GM12878 (cell line): ENCODE measurements at regions of chr1 and their contacts with region 1.

Region 1: DNA sequence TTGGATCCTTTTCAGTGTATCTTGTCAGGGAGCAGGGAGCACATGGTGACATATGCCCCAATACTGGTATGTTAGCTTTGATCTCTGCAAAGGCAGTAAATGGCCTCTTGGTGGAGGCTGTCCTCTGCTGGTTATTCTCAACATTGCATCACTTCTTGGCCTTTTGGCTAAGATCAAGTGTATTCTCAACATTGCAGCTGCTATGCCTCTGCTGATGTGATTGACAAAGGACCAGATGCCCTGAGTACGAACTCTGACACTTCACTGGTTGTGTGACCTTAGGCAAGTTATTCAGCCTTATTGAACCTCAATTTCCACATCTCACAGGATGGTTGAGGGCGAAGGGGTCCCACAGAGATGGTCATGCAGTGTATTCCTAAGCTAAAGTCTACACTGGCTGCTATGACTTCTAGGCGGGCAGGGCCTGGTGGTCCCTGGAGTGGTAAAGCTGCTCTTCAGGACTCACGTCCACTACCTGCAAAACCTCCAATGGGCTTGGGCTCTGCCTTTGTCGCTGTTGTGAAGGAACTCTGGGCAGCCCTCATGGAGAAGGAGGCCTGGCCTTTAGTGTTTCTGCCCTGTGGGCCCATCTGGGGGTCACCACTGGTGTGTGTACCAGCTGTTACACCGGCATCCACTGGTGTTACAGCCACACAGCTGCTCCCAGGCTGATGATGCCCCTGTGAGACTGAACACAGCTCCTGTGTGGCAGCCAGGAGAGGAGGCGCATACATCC is 64.8 kb downstream of the DNTTIP2 start:
- DNase-seq: peak; percentile 40
- ATAC-seq: peak; percentile 92
- H3K4me3 ChIP-seq: no peak overlapping the region
- H3K27ac ChIP-seq: no peak overlapping the region
- H3K4me1 ChIP-seq: peaks cover 8% of the 10 kb centered on the region
- H3K27me3 ChIP-seq: no peaks in the 10 kb centered on the region; a peak in 1 of 4 replicates
- CTCF ChIP-seq: peak; percentile 97 to 99 (median 97); a peak in 5 of 6 replicates
- EP300 ChIP-seq: no peak
- POLR2A ChIP-seq: no peak
- RAD21 ChIP-seq: peak; percentile 100

Region 2: DNA sequence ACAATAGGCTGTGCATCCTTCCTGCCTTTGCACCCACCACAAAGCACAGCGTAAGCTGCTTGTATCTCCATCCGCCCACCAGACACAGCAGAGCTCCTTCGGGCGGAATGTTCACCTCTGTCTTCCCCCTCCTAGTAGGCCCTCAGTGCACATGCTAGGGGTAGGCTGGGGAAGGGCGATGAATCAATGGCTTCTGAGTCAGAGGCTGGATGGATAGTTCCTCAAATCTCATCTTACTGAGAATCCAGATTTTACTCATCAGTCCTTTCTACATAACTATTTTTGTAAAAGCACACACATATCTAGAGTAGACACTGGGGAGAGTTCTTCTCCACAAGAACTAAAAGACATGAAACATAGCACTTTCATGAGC is 206.4 kb before region 1 on chr1:
- CTCF ChIA-PET with region 1: interaction called, 9 read pairs
- POLR2A ChIA-PET with region 1: no interaction called
- RAD21 ChIA-PET with region 1: interaction called, 5 read pairs
- SMC1A ChIA-PET with region 1: interaction called, 15 read pairs
- in situ Hi-C with region 1: no loop called
- intact Hi-C with region 1: no loop called
- DNase-seq: peak; percentile 76
- ATAC-seq: peak; percentile 94
- H3K4me3 ChIP-seq: no peak overlapping the region
- H3K27ac ChIP-seq: peak overlapping the region; percentile 40; the same call in 1 of the 2 replicates
- H3K4me1 ChIP-seq: peaks cover 28% of the 10 kb centered on the region
- H3K27me3 ChIP-seq: no peaks in the 10 kb centered on the region; a peak in 2 of 4 replicates
- CTCF ChIP-seq: no peak
- EP300 ChIP-seq: peak in 1 of 2 experiments; percentile 89; a peak in 2 of 4 replicates
- POLR2A ChIP-seq: no peak
- RAD21 ChIP-seq: no peak

Region 3: GRCh38 chr1:93672069-93672468 is 142.2 kb before region 1 on chr1:
- CTCF ChIA-PET with region 1: interaction called, 28 read pairs
- POLR2A ChIA-PET with region 1: no interaction called
- RAD21 ChIA-PET with region 1: interaction called, 9 read pairs
- SMC1A ChIA-PET with region 1: interaction called, 39 read pairs
- in situ Hi-C with region 1: no loop called
- intact Hi-C with region 1: no loop called
- DNase-seq: no peak
- ATAC-seq: no peak
- H3K4me3 ChIP-seq: no peak overlapping the region
- H3K27ac ChIP-seq: no peak overlapping the region
- H3K4me1 ChIP-seq: no peaks in the 10 kb centered on the region
- H3K27me3 ChIP-seq: no peaks in the 10 kb centered on the region; a peak in 1 of 4 replicates
- CTCF ChIP-seq: no peak
- EP300 ChIP-seq: no peak
- POLR2A ChIP-seq: no peak
- RAD21 ChIP-seq: no peak

Region 4: GRCh38 chr1:93692983-93693591 is 121.1 kb before region 1 on chr1:
- CTCF ChIA-PET with region 1: interaction called, 9 read pairs
- POLR2A ChIA-PET with region 1: interaction called, 3 read pairs
- RAD21 ChIA-PET with region 1: interaction called, 8 read pairs
- SMC1A ChIA-PET with region 1: interaction called, 11 read pairs
- in situ Hi-C with region 1: no loop called
- intact Hi-C with region 1: no loop called
- DNase-seq: peak; percentile 63
- ATAC-seq: peak; percentile 88
- H3K4me3 ChIP-seq: no peak overlapping the region
- H3K27ac ChIP-seq: peak overlapping the region; percentile 30
- H3K4me1 ChIP-seq: peaks cover 44% of the 10 kb centered on the region
- H3K27me3 ChIP-seq: no peaks in the 10 kb centered on the region
- CTCF ChIP-seq: no peak
- EP300 ChIP-seq: peak in 1 of 2 experiments; percentile 14; a peak in 1 of 4 replicates
- POLR2A ChIP-seq: no peak
- RAD21 ChIP-seq: no peak

Region 5: GRCh38 chr1:93734999-93735398 is 79.2 kb before region 1 on chr1:
- CTCF ChIA-PET with region 1: interaction called, 32 read pairs
- POLR2A ChIA-PET with region 1: no interaction called
- RAD21 ChIA-PET with region 1: interaction called, 5 read pairs
- SMC1A ChIA-PET with region 1: interaction called, 4 read pairs
- in situ Hi-C with region 1: no loop called
- intact Hi-C with region 1: loop called (anchors 2 kb)
- DNase-seq: no peak
- ATAC-seq: peak; percentile 70
- H3K4me3 ChIP-seq: no peak overlapping the region
- H3K27ac ChIP-seq: no peak overlapping the region
- H3K4me1 ChIP-seq: peaks cover 11% of the 10 kb centered on the region
- H3K27me3 ChIP-seq: no peaks in the 10 kb centered on the region
- CTCF ChIP-seq: peak; percentile 28 to 52 (median 39)
- EP300 ChIP-seq: no peak
- POLR2A ChIP-seq: no peak
- RAD21 ChIP-seq: peak; percentile 39

Region 6: DNA sequence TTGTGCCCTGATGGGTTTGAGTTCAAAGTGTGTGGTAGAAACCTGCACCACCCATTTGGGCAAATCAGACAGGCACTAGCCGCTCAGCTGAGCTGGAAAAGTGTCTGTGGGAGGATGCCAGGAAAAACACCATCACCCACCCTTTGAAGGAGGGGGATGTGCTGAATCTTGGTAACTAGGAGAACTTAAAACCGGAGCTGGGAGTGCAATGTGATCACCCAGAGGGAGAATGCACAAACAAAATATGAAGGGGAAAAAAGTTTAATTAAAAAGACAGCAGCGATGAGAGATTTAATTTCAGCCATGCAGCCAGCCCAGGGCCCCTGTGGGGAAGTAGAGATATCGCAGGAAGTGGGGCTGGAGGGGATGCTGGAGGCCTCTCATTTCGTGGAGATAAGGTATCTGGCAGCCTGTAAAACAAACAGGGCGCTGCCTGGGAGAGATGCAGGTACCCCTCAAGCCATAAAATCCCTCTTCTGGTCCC is 45.8 kb before region 1 on chr1:
- CTCF ChIA-PET with region 1: no interaction called
- POLR2A ChIA-PET with region 1: no interaction called
- RAD21 ChIA-PET with region 1: no interaction called
- SMC1A ChIA-PET with region 1: interaction called, 13 read pairs
- in situ Hi-C with region 1: no loop called
- intact Hi-C with region 1: no loop called
- DNase-seq: no peak
- ATAC-seq: no peak
- H3K4me3 ChIP-seq: no peak overlapping the region
- H3K27ac ChIP-seq: no peak overlapping the region
- H3K4me1 ChIP-seq: no peaks in the 10 kb centered on the region
- H3K27me3 ChIP-seq: no peaks in the 10 kb centered on the region
- CTCF ChIP-seq: no peak
- EP300 ChIP-seq: no peak
- POLR2A ChIP-seq: no peak
- RAD21 ChIP-seq: no peak

Region 7: DNA sequence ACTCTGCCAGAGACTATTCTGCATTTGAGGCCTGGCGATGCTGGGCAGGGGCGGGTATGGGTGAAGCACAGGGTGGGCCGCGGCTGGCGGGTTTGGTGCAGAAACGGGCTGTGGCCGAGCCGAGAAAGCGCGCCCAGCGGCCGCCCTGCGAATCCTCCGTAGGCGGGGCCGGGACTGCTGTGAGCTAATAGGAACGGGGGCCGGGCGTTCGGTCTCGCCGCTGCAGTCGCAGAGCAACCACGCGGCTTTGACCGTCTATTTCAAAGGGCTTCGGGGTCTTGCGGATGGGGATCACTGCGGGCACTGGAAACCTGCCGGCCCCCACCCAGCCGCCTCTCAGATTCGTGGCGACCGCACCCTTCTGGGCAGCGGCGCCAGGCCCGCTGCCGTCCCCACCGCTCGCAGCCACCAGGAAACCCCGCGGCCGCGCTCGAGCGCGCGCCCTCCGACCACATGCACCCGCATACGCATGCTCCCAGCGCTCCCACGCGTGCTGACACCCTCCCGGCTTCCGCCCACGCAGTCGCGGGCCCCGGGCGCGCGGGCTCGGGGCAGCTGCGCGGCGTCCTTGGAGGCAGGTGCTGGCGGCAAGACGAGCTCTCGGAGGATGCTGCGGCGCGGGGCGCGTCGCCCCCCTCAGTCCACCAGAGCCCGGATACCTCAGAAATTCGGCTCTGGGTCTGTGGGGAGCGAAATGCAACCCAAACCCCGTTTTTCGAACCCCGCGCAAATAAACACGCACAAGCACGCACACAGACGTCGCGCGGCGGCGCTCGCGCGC is 32.2 kb after region 1 on chr1:
- CTCF ChIA-PET with region 1: interaction called, 156 read pairs
- POLR2A ChIA-PET with region 1: no interaction called
- RAD21 ChIA-PET with region 1: interaction called, 36 read pairs
- SMC1A ChIA-PET with region 1: interaction called, 89 read pairs
- in situ Hi-C with region 1: no loop called
- intact Hi-C with region 1: no loop called
- DNase-seq: no peak
- ATAC-seq: peak; percentile 78
- H3K4me3 ChIP-seq: peak overlapping the region; percentile 84
- H3K27ac ChIP-seq: peak overlapping the region; percentile 69
- H3K4me1 ChIP-seq: peaks cover 6% of the 10 kb centered on the region
- H3K27me3 ChIP-seq: no peaks in the 10 kb centered on the region
- CTCF ChIP-seq: peak; percentile 17 to 44 (median 24); a peak in 3 of 6 replicates
- EP300 ChIP-seq: no peak
- POLR2A ChIP-seq: peak; percentile 75
- RAD21 ChIP-seq: no peak

Region 8: DNA sequence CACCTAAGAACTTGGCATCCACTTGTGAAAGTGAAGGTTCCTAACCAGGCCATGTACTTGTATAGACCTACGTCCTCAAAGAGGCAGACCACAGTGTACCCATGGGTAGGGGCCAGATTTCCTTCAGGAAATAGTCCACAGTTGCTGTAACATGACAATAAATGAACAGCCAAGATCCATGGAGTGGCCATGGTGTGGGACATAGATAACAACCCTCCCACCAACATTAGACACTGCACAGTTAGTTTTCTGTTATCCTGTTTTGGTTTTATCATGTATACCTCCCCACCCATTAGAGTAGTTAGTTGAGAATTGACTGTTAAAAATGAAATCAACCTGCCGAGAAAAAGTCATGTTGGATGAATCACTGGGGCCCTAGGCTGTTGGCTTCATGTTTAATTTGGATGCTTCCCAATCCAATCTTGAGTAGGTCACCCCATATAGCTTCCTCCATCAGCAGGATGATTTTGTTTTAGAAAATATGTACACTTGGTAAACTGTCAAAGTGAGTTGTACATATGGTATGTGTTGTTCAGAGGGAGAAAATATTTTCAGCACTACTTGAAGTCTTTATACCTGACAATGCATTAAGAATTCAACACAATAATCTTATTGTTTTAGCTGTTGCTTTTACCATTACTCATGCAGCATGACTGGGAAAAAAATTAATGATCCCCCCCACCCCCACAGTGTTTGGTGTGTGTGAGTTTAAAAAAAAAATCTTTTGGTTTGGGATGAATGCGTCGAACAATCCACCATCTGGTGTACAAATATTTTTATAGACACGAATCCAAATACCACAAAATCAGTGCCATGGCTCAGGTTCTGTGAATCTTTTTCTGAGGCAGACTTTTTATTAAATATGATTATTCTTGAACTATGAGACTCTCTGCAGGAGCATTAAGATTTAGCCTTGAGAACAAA is 511.4 kb after region 1 on chr1:
- CTCF ChIA-PET with region 1: no interaction called
- POLR2A ChIA-PET with region 1: no interaction called
- RAD21 ChIA-PET with region 1: no interaction called
- SMC1A ChIA-PET with region 1: no interaction called
- in situ Hi-C with region 1: no loop called
- intact Hi-C with region 1: no loop called
- DNase-seq: no peak
- ATAC-seq: no peak
- H3K4me3 ChIP-seq: no peak overlapping the region
- H3K27ac ChIP-seq: no peak overlapping the region
- H3K4me1 ChIP-seq: no peaks in the 10 kb centered on the region
- H3K27me3 ChIP-seq: peaks cover 2 to 4% of the 10 kb centered on the region in 2 experiments; a peak in 2 of 4 replicates
- CTCF ChIP-seq: no peak
- EP300 ChIP-seq: no peak
- POLR2A ChIP-seq: no peak
- RAD21 ChIP-seq: no peak